A673 (cell line): ENCODE measurements at regions of chr13 and their contacts with region 1.

Region 1: DNA sequence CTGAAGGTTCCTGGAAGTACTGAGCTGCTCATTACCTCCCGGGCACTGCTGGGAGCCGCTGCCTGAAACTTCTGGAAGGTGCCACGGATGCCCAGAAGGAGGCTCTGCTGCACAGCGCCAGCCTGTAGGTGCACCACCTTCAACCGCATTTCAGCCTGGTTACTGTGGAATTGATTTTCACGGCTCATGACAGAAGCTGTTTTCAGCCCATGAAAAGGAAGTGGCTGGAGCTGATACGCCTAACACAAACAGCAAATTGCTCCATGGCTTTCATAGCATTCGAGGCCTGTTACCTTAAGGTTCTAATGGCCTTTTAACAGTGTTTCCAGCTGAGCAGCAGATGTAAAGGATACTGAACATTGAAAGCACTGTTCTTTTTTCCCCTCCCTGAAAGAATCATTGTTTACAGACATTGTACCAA is 22.0 kb downstream of the GPC6 start:
- DNase-seq: peak; percentile 92
- H3K4me3 ChIP-seq: no peak overlapping the region
- H3K27ac ChIP-seq: peak overlapping the region; percentile 77
- H3K4me1 ChIP-seq: peaks cover 67% of the 10 kb centered on the region
- H3K27me3 ChIP-seq: no peaks in the 10 kb centered on the region
- CTCF ChIP-seq: peak; percentile 81

Region 2: GRCh38 chr13:92912629-92913028 is 336.0 kb before region 1 on chr13:
- CTCF ChIA-PET with region 1: no interaction called
- POLR2A ChIA-PET with region 1: no interaction called
- intact Hi-C with region 1: no loop called
- DNase-seq: no peak
- H3K4me3 ChIP-seq: no peak overlapping the region
- H3K27ac ChIP-seq: no peak overlapping the region
- H3K4me1 ChIP-seq: no peaks in the 10 kb centered on the region
- H3K27me3 ChIP-seq: no peaks in the 10 kb centered on the region
- CTCF ChIP-seq: no peak

Region 3: GRCh38 chr13:93223000-93223399 is 25.6 kb before region 1 on chr13:
- CTCF ChIA-PET with region 1: interaction called, 10 read pairs
- POLR2A ChIA-PET with region 1: interaction called, 3 read pairs
- intact Hi-C with region 1: no loop called
- DNase-seq: no peak
- H3K4me3 ChIP-seq: no peak overlapping the region
- H3K27ac ChIP-seq: no peak overlapping the region
- H3K4me1 ChIP-seq: peaks cover 21% of the 10 kb centered on the region
- H3K27me3 ChIP-seq: no peaks in the 10 kb centered on the region
- CTCF ChIP-seq: no peak